ENCODE measurements at regions of chr9 and their contacts with region 1.

Region 1: GRCh38 chr9:124291801-124292396 is 34.1 kb downstream of the NEK6 start:
- DNase-seq: peak; percentile 71
- CTCF ChIP-seq: peak; percentile 13

Region 2: DNA sequence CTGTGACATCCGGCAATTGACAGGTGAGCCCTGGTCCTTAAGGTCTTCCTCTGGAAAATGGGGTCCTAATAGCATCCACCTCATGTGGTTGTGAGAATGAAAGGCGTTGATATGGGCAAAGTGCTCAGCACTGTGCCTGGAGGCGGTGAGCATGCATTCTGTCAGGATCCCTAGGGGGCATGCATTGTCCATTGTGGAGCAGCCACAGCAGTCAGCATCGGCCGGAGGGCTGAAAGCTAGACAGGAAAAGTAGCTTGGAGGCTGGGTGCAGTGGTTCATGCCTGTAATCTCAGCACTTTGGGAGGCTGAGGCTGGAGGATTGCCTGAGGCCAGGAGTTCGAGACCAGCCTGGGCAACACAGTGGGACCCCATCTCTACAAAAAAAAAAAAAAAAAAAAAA is 158.2 kb before region 1 on chr9:
- in situ Hi-C with region 1: loop called (anchors 10 kb)
- DNase-seq: no peak
- CTCF ChIP-seq: peak; percentile 46

Region 3: GRCh38 chr9:125308683-125309082 is 1016.8 kb after region 1 on chr9:
- in situ Hi-C with region 1: no loop called
- DNase-seq: no peak
- CTCF ChIP-seq: no peak

Measured in GM13977 (cell line).